ENCODE measurements at regions of chr12 and their contacts with region 1.

Region 1: GRCh38 chr12:108514973-108515814 is at the start of gene FICD:
- DNase-seq: peak; percentile 99
- H3K4me3 ChIP-seq: peak within 1 kb of the TSS; percentile 59 to 61
- H3K27ac ChIP-seq: peak within 1 kb of the TSS; percentile 51 to 52
- H3K4me1 ChIP-seq: no peaks in the 10 kb centered on the region
- H3K27me3 ChIP-seq: no peaks in the 10 kb centered on the region
- CTCF ChIP-seq: peak in 1 of 4 experiments; percentile 8
- POLR2A ChIP-seq: peak; percentile 31
- total RNA-seq, gene FICD: 8.2 to 10.7 TPM

Region 2: DNA sequence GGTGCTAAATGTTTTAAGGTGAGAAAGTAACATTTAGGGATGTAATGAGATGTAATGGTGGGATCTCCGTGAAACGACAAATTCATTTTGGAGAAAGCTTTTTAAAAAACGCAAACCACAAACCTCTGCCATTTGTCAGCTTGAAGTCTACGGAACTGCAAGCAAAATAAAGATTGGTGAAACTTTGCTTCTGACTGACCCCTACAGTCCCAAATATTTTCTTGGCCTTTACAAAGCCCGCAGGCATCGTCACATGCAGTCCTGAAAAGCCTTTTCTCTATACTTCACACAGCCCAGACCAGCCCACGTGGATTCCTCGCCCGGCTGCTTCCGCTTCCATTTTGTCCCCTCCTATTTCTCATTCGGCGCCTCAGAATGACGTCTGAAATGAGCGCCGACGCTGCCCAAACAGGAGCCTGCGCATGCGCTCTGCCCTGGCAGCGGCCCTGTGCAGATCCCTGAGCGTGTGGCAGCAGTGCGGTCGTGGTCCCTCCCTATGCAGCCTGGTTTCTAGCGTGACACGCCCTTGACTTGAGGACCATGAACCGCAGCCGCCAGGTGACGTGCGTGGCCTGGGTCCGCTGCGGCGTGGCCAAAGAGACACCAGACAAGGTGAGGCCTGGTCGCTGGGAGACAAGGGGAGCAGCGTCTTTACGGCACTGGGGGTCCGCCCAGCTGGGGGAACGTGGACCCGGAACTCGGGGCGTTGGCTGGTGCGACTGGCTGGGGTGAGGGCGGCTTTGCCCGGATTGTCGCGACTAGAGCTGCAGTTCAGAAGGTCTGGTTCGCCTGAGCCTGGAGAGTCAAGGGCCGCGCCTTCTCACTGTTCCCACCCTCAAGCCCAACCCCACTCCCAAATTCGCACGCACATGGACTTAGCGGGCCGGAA is 829.6 kb before region 1 on chr12 and contains the start of gene PWP1:
- intact Hi-C with region 1: loop called (anchors 10 kb)
- DNase-seq: peak; percentile 94
- H3K4me3 ChIP-seq: peak within 1 kb of the TSS; percentile 66 to 86
- H3K27ac ChIP-seq: peak within 1 kb of the TSS; percentile 66 to 68
- H3K4me1 ChIP-seq: no peaks in the 10 kb centered on the region
- H3K27me3 ChIP-seq: no peaks in the 10 kb centered on the region
- CTCF ChIP-seq: peak in 1 of 4 experiments; percentile 9
- POLR2A ChIP-seq: peak; percentile 50
- total RNA-seq, gene PWP1: 49.1 to 55.2 TPM

Region 3: DNA sequence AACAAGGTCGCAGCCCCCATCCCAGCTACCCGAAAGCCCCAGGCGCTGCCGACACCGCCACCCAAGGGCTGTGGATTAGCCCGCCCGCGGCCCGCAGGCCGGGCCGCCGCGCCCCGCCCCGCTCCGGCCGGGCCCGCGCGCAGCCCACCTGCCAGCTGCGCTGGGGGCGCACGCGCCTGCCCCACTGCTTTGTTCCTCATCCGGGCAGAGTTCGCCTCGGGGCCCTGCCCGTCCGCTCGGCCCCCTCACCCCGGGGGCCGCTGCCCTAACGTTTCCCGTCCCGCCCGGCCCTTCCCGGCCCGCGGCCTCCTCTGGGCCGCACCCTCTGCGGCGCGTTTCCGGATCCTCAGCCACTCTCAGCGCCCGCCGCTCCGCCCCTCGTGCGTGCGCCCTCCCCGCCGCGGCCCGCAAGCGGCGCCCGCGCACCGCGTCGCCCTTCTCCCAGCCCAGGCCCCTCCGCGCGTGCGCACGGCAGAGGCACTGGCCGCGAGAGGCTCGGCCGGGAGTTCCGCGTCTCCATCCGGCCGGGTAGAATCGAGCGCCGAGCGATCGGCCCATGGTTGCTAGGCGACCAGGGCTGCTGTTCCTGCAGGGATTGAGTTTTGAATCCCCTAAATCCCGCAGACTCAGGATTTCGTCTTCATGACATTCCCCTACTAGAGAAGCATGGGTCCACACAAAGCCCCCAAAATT is 754.2 kb before region 1 on chr12 and contains the start of gene PRDM4:
- intact Hi-C with region 1: loop called (anchors 10 kb)
- DNase-seq: peak; percentile 91
- H3K4me3 ChIP-seq: peak within 1 kb of the TSS; percentile 75 to 81
- H3K27ac ChIP-seq: peak within 1 kb of the TSS; percentile 57 to 70
- H3K4me1 ChIP-seq: no peaks in the 10 kb centered on the region
- H3K27me3 ChIP-seq: no peaks in the 10 kb centered on the region
- CTCF ChIP-seq: peak; percentile 31 to 89 (median 64)
- POLR2A ChIP-seq: peak; percentile 96
- total RNA-seq, gene PRDM4: 32.7 to 36.0 TPM

Region 4: DNA sequence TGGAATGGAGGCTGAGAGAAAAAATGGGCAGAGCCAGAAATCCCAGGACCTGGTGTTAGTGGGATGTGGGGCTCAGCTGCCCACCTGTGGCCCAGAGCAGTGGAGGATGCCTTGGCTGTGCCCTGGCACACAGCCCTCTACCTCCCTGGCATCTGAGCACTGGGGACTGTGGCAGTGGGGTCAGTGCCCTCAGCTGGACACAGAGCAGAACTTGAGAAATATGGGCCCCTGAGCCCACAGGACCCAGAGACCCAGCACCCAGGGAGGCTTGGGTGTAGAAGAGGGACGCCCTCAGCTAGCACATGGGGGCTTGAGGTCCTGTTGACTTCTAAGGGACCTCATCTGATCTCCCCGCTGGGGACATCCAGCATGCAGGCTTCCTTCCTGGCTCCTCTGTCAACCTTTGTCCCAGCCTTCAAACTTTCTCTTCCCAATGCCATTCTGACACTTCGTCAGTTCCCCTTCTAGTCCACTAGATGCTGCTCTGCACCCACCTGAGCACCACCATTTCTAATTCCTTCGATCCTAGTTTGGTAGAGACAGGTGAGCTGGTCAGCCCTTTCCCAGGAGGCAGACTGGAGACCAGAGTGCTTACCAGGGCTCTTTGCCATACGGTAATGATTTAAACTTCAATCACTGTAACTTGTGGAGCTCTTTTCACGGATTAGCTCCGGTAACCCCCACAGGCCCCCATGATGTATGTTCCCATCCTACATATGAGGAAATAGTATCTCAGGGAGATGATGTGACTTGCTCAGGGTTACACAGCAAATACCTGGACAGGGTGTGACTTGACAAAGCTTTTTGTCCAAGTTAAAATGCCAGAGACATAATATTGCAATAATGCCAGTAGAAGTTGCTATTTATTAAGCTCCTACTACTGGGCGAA is 597.0 kb before region 1 on chr12:
- intact Hi-C with region 1: loop called (anchors 5 kb)
- DNase-seq: no peak
- H3K4me3 ChIP-seq: no peak overlapping the region
- H3K27ac ChIP-seq: no peak overlapping the region
- H3K4me1 ChIP-seq: no peaks in the 10 kb centered on the region
- H3K27me3 ChIP-seq: no peaks in the 10 kb centered on the region
- CTCF ChIP-seq: peak in 3 of 4 experiments; percentile 26 to 69 (median 62)
- POLR2A ChIP-seq: no peak

Region 5: DNA sequence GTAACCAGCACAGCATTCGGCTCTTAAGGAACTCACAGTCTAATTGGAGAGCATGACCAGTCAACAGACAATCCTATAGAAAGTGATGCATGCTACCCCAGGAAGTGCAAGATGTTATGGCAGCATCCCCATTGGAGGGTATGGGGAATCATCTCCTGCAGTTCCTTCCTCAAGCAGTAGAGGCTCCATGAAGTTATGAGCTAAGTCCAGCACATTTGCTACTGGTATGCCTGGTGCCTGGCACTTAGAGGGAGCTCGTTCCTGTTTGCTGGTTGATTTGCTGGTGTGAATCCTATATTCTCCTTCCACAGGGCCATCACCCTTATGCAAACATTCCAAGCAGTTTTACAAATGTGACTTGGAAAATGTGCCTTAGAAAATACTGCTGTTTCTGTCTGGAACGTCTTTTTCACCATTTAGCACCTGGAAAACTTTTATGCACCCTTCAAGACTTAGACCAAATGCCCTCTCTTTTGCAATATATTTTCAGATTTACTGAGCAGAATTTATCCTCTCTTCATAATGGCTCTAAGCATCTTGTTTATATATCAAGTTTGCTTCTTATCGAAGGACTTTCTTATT is 522.2 kb before region 1 on chr12:
- intact Hi-C with region 1: loop called (anchors 10 kb)
- DNase-seq: no peak
- H3K4me3 ChIP-seq: no peak overlapping the region
- H3K27ac ChIP-seq: no peak overlapping the region
- H3K4me1 ChIP-seq: no peaks in the 10 kb centered on the region
- H3K27me3 ChIP-seq: no peaks in the 10 kb centered on the region
- CTCF ChIP-seq: peak in 2 of 4 experiments; percentile 12 to 25
- POLR2A ChIP-seq: no peak

Region 6: DNA sequence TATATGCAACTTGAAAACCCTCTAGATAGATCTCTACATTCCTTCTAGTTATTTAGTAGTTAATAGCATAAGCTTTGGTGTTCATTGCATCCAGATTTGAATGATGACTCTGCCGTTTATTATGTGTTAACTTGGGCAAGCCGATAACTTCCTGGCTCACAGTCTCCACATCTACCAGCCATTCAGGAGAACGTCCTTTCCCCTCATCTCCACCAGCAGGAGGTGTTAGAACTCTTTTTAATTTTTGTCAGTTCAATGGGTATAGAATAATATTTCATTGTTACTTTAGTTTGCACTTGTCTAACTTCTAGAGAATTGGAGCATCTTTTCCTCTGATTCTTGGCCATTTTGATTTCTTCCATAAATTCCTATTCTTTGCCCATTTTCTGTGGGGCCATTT is 416.1 kb before region 1 on chr12:
- intact Hi-C with region 1: loop called (anchors 5 kb)
- DNase-seq: no peak
- H3K4me3 ChIP-seq: no peak overlapping the region
- H3K27ac ChIP-seq: no peak overlapping the region
- H3K4me1 ChIP-seq: no peaks in the 10 kb centered on the region
- H3K27me3 ChIP-seq: no peaks in the 10 kb centered on the region
- CTCF ChIP-seq: peak in 1 of 4 experiments; percentile 38
- POLR2A ChIP-seq: no peak

Measured in prostate gland (tissue), 2 donors.